Psoas muscle (tissue), 8 donors: ENCODE measurements at regions of chr7 and their contacts with region 1.

Region 1: GRCh38 chr7:150988230-150989226 is 2.3 kb upstream of the NOS3 start:
- DNase-seq: peak; percentile 64 to 77
- ATAC-seq: peak; percentile 57 to 70 (median 67)
- H3K4me3 ChIP-seq: no peak overlapping the region
- H3K27ac ChIP-seq: peak overlapping the region; percentile 9
- H3K4me1 ChIP-seq: no peaks in the 10 kb centered on the region
- H3K27me3 ChIP-seq: peaks cover 0 to 4% (median 0%) of the 10 kb centered on the region in 3 donors
- CTCF ChIP-seq: peak; percentile 84

Region 2: DNA sequence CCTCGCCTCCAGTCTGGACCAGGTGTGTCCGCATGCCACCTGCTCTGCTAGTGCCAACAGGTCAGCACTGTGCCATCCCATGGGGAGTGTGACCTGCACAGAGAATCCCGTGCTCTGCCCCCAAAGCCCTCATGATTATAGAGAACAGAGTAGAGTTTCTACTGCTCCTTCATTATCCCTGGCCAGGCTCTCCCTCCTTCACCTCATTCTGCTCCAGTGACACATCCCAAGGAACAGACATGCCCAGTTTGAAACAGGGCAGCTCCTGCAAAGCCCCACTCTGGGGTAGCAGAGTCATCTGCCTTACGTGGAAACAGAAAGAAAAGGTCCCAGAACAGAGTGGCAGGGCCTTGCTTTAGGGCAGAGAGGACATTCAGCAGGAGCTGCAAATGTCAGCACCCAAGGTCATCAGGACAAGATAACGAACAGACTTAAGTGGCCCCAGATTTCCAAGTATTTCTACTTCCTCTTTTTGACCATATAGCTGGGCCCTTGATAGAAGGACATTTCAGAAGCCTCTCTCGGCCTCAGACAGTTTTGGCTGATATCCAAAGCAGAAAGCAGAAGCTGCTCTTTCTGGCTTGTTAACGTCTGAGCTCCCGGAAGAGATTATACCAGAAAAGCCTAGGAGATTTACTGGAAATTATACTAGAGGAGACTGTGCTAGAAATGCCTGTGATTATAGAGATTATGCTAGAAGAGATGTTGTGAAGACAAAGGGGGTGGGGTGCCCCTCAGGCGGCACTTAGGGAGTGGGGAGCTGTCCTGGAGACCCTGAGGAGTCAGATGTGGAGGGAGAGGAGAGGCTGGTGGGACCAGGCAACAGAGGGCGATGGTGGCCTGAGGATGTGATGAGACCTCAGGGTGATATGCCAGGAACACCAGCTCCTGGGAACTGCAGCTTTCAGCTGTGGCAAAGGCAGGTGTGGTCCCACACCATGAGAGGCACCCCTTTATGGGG is 200.9 kb before region 1 on chr7:
- intact Hi-C with region 1: loop called in 1 of 2 experiments (anchors 10 kb)
- DNase-seq: no peak
- ATAC-seq: peak in 1 of 4 donors; percentile 44
- H3K4me3 ChIP-seq: no peak overlapping the region
- H3K27ac ChIP-seq: peak overlapping the region; percentile 52
- H3K4me1 ChIP-seq: no peaks in the 10 kb centered on the region
- H3K27me3 ChIP-seq: peaks cover 0 to 3% (median 0%) of the 10 kb centered on the region in 3 donors
- CTCF ChIP-seq: no peak

Region 3: DNA sequence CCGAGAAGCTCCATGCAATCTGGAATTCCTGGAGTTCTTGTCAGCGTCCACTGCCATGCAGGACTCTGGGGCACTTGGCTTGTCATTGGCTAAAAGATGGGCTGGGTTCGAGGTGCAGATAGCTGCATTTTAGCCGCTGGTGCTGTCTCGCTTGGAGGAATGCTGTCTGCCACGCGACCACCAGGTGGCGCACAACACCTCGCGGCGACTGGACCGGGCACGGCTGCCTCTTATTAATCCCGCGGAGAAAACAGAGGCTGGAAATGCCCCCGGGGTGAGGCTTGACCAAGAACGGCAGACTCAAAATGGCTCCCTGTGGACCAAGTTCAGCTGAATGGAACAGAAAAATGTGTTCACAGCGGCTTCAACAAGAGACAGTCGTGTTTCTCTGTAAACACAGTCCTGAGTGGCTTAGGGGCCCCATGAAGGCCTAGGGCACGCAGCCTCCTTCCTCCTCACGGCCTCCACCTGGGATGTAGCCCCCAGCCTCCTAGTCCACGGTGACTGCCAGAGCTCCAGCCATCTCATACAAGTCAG is 90.0 kb before region 1 on chr7:
- intact Hi-C with region 1: loop called in 1 of 2 experiments (anchors 1 kb)
- DNase-seq: peak; percentile 78 to 87
- ATAC-seq: peak; percentile 75 to 90 (median 82)
- H3K4me3 ChIP-seq: no peak overlapping the region
- H3K27ac ChIP-seq: no peak overlapping the region
- H3K4me1 ChIP-seq: no peaks in the 10 kb centered on the region
- H3K27me3 ChIP-seq: peaks cover 0 to 49% (median 8%) of the 10 kb centered on the region in 3 donors
- CTCF ChIP-seq: peak; percentile 95